CD14-positive monocyte (primary cell): ENCODE measurements at regions of chr5 and their contacts with region 1.

Region 1: DNA sequence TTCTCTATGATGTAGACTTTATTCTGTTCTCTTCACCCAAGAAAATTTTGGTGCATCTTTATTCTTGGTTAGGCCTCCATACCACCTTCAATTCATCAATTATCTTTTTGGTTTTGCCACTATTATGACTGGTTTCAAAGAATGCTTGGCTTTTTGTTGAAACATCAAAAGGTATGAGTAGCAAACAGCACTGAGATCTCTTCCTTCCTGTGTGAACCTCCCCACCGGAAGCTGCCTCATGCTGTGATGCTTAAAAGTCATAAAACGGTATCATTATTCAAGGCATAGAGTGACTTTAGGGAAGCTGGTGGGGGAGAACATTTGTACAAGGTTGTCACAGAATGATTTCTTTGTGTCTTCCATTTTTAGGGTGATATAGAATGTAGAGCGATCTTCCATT is 70.6 kb downstream of the IQGAP2 start:
- DNase-seq: peak; percentile 44 to 75 (median 52)
- H3K4me3 ChIP-seq: no peak overlapping the region
- H3K4me3 Mint-ChIP-seq: no peak overlapping the region
- H3K27ac ChIP-seq: peak overlapping the region in 1 of 2 donors; percentile 57
- H3K27ac Mint-ChIP-seq: peak overlapping the region; percentile 19 to 93 (median 66)
- H3K4me1 ChIP-seq: peaks cover 23 to 47% of the 10 kb centered on the region in 2 donors
- H3K4me1 Mint-ChIP-seq: peaks cover 58% of the 10 kb centered on the region
- H3K27me3 ChIP-seq: no peaks in the 10 kb centered on the region
- H3K27me3 Mint-ChIP-seq: peaks cover 0 to 1% (median 0%) of the 10 kb centered on the region in 3 donors
- CTCF ChIP-seq: no peak

Region 2: GRCh38 chr5:76062502-76063041 is 411.1 kb before region 1 on chr5:
- intact Hi-C with region 1: no loop called
- DNase-seq: no peak
- H3K4me3 ChIP-seq: no peak overlapping the region
- H3K4me3 Mint-ChIP-seq: no peak overlapping the region
- H3K27ac ChIP-seq: no peak overlapping the region
- H3K27ac Mint-ChIP-seq: no peak overlapping the region
- H3K4me1 ChIP-seq: no peaks in the 10 kb centered on the region
- H3K4me1 Mint-ChIP-seq: no peaks in the 10 kb centered on the region
- H3K27me3 ChIP-seq: peaks cover 2 to 14% of the 10 kb centered on the region in 2 donors
- H3K27me3 Mint-ChIP-seq: peaks cover 3 to 6% (median 4%) of the 10 kb centered on the region in 3 donors
- CTCF ChIP-seq: no peak

Region 3: GRCh38 chr5:76422227-76422626 is 51.4 kb before region 1 on chr5:
- intact Hi-C with region 1: no loop called
- DNase-seq: no peak
- H3K4me3 ChIP-seq: no peak overlapping the region
- H3K4me3 Mint-ChIP-seq: no peak overlapping the region
- H3K27ac ChIP-seq: peak overlapping the region in 1 of 2 donors; percentile 17
- H3K27ac Mint-ChIP-seq: peak overlapping the region in 5 of 7 donors; percentile 6 to 64 (median 51)
- H3K4me1 ChIP-seq: peaks cover 21 to 34% of the 10 kb centered on the region in 2 donors
- H3K4me1 Mint-ChIP-seq: peaks cover 53% of the 10 kb centered on the region
- H3K27me3 ChIP-seq: no peaks in the 10 kb centered on the region
- H3K27me3 Mint-ChIP-seq: no peaks in the 10 kb centered on the region
- CTCF ChIP-seq: no peak

Region 4: GRCh38 chr5:76537073-76537543 is 63.4 kb after region 1 on chr5:
- intact Hi-C with region 1: loop called in 1 of 2 experiments (anchors 10 kb)
- DNase-seq: no peak
- H3K4me3 ChIP-seq: no peak overlapping the region
- H3K4me3 Mint-ChIP-seq: no peak overlapping the region
- H3K27ac ChIP-seq: no peak overlapping the region
- H3K27ac Mint-ChIP-seq: no peak overlapping the region
- H3K4me1 ChIP-seq: peaks cover 2 to 3% of the 10 kb centered on the region in 2 donors
- H3K4me1 Mint-ChIP-seq: peaks cover 22% of the 10 kb centered on the region
- H3K27me3 ChIP-seq: no peaks in the 10 kb centered on the region
- H3K27me3 Mint-ChIP-seq: no peaks in the 10 kb centered on the region
- CTCF ChIP-seq: no peak